HEK293 (cell line): ENCODE measurements at regions of chr1 and their contacts with region 1.

Region 1: GRCh38 chr1:114750780-114751179 is 7.0 kb downstream of the CSDE1 start:
- H3K4me3 ChIP-seq: no peak overlapping the region
- H3K27ac ChIP-seq: no peak overlapping the region
- H3K4me1 ChIP-seq: peaks cover 9% of the 10 kb centered on the region
- CTCF ChIP-seq: no peak

Region 2: GRCh38 chr1:114737314-114737849 is 13.4 kb before region 1 on chr1:
- CTCF ChIA-PET with region 1: interaction called, 10 read pairs
- POLR2A ChIA-PET with region 1: no interaction called
- H3K4me3 ChIP-seq: no peak overlapping the region
- H3K27ac ChIP-seq: no peak overlapping the region
- H3K4me1 ChIP-seq: no peaks in the 10 kb centered on the region
- CTCF ChIP-seq: no peak

Region 3: DNA sequence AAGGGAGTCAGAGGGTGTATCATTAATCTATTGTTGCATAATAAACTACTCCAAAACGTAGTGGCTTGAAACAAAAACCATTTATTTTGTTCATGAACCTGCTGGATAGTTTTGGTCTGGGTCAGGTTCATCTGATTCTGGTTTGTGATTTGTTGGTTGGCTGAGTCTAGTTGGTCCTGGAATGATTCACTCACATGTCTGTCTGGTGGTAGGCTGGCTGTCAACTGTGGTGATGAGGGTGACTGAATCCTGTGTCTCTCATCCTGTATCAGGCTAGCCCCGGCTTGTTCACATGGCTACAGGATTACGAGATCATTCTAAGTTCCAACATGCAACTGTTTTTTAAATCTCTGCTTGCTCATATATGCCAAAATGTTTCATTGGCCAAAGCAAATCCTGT is 52.2 kb after region 1 on chr1:
- CTCF ChIA-PET with region 1: no interaction called
- POLR2A ChIA-PET with region 1: no interaction called
- H3K4me3 ChIP-seq: no peak overlapping the region
- H3K27ac ChIP-seq: no peak overlapping the region
- H3K4me1 ChIP-seq: no peaks in the 10 kb centered on the region
- CTCF ChIP-seq: no peak